ENCODE measurements at regions of chr16 and their contacts with region 1.

Region 1: GRCh38 chr16:77584205-77584859 is 138.0 kb upstream of the NUDT7 start:
- DNase-seq: peak; percentile 41 to 59 (median 56)
- ATAC-seq: peak; percentile 74
- H3K4me3 ChIP-seq: no peak overlapping the region
- H3K27ac ChIP-seq: no peak overlapping the region
- H3K4me1 ChIP-seq: no peaks in the 10 kb centered on the region
- H3K27me3 ChIP-seq: peaks cover 2 to 6% of the 10 kb centered on the region in 2 experiments; a peak in 1 of 5 replicates
- CTCF ChIP-seq: peak; percentile 67 to 90 (median 85)
- EP300 ChIP-seq: no peak
- POLR2A ChIP-seq: no peak
- RAD21 ChIP-seq: peak; percentile 79 to 89

Region 2: DNA sequence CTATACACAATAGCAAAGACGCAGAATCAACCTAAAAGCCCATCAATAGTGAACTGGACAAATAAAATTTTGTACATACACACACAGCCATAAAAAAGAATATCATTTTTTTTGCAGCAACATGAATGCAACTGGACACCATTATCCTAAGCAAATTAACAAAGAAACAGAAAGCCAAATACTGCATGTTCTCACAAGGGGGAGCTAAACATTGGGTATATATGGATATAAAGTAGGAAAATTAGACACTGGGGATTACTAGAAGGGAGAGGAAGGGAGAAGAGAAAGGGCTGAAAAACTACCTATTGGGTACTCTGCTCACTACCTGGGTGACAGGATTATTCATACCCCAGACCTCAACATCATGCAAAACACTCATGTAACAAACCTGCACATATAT is 177.7 kb before region 1 on chr16:
- CTCF ChIA-PET with region 1: no interaction called
- POLR2A ChIA-PET with region 1: no interaction called
- in situ Hi-C with region 1: no loop called
- intact Hi-C with region 1: loop called (anchors 10 kb)
- DNase-seq: peak in 1 of 4 experiments; percentile 5
- ATAC-seq: no peak
- H3K4me3 ChIP-seq: no peak overlapping the region
- H3K27ac ChIP-seq: no peak overlapping the region
- H3K4me1 ChIP-seq: no peaks in the 10 kb centered on the region
- H3K27me3 ChIP-seq: no peaks in the 10 kb centered on the region
- CTCF ChIP-seq: peak in 2 of 3 experiments; percentile 7 to 33; a peak in 4 of 6 replicates
- EP300 ChIP-seq: no peak
- POLR2A ChIP-seq: no peak
- RAD21 ChIP-seq: 0 out of 4 replicates have a peak, but pooled peaks of 1 of the 2 experiments have one; percentile 15

Region 3: GRCh38 chr16:77514500-77515220 is 69.7 kb before region 1 on chr16:
- CTCF ChIA-PET with region 1: interaction called, 3 read pairs
- POLR2A ChIA-PET with region 1: no interaction called
- in situ Hi-C with region 1: no loop called
- intact Hi-C with region 1: loop called (anchors 10 kb)
- DNase-seq: no peak
- ATAC-seq: no peak
- H3K4me3 ChIP-seq: no peak overlapping the region
- H3K27ac ChIP-seq: no peak overlapping the region
- H3K4me1 ChIP-seq: no peaks in the 10 kb centered on the region
- H3K27me3 ChIP-seq: no peaks in the 10 kb centered on the region
- CTCF ChIP-seq: no peak
- EP300 ChIP-seq: no peak
- POLR2A ChIP-seq: no peak
- RAD21 ChIP-seq: no peak

Region 4: GRCh38 chr16:77556201-77556873 is 28.0 kb before region 1 on chr16:
- CTCF ChIA-PET with region 1: no interaction called
- POLR2A ChIA-PET with region 1: no interaction called
- in situ Hi-C with region 1: no loop called
- intact Hi-C with region 1: no loop called
- DNase-seq: no peak
- ATAC-seq: no peak
- H3K4me3 ChIP-seq: no peak overlapping the region
- H3K27ac ChIP-seq: no peak overlapping the region
- H3K4me1 ChIP-seq: no peaks in the 10 kb centered on the region
- H3K27me3 ChIP-seq: peaks cover 0 to 2% of the 10 kb centered on the region in 2 experiments; a peak in 1 of 5 replicates
- CTCF ChIP-seq: no peak
- EP300 ChIP-seq: no peak
- POLR2A ChIP-seq: no peak
- RAD21 ChIP-seq: no peak

Region 5: GRCh38 chr16:77971306-77972271 is 387.3 kb after region 1 on chr16:
- CTCF ChIA-PET with region 1: no interaction called
- POLR2A ChIA-PET with region 1: no interaction called
- in situ Hi-C with region 1: no loop called
- intact Hi-C with region 1: loop called (anchors 10 kb)
- DNase-seq: peak; percentile 72 to 81 (median 80)
- ATAC-seq: peak; percentile 96
- H3K4me3 ChIP-seq: no peak overlapping the region
- H3K27ac ChIP-seq: no peak overlapping the region
- H3K4me1 ChIP-seq: no peaks in the 10 kb centered on the region
- H3K27me3 ChIP-seq: peaks cover 0 to 2% of the 10 kb centered on the region in 2 experiments; a peak in 3 of 5 replicates
- CTCF ChIP-seq: peak; percentile 75 to 86 (median 82)
- EP300 ChIP-seq: no peak
- POLR2A ChIP-seq: no peak
- RAD21 ChIP-seq: peak; percentile 76 to 86